ENCODE measurements at regions of chrX and their contacts with region 1.

Region 1: DNA sequence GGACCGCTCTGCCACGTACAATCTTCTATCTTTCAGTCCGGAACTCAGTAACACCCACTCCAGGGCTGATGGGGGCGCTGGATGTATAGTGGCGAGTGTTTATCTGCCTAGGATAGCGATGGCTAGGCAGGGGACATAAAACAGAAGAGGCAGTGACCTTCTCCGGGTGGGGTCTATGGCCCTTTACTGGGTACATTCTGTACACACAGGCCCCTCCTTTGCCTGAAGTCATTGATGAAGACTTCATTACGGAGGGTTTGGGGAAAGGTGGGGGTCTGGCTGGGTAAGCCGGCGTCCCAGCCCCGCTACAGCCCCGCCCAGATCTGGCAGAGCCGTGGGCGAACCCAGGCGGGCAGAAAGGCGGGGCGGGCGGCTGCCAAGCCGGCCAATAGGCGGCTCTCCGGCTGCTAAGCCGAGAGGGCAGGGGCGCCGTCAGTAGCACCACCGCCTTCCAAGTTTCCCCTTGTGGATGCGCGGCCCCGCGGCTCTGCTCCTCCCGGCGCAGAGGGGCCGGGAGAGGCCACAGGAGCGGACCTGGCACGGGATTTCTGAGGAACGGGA is at the start of gene CHST7:
- DNase-seq: peak; percentile 77
- ATAC-seq: peak; percentile 47
- H3K4me3 Mint-ChIP-seq: peak within 1 kb of the TSS; percentile 77
- H3K27ac Mint-ChIP-seq: peak within 1 kb of the TSS; percentile 95
- H3K4me1 Mint-ChIP-seq: peaks cover 41% of the 10 kb centered on the region
- H3K27me3 Mint-ChIP-seq: no peaks in the 10 kb centered on the region
- total RNA-seq, gene CHST7: 2.0 to 2.5 TPM

Region 2: DNA sequence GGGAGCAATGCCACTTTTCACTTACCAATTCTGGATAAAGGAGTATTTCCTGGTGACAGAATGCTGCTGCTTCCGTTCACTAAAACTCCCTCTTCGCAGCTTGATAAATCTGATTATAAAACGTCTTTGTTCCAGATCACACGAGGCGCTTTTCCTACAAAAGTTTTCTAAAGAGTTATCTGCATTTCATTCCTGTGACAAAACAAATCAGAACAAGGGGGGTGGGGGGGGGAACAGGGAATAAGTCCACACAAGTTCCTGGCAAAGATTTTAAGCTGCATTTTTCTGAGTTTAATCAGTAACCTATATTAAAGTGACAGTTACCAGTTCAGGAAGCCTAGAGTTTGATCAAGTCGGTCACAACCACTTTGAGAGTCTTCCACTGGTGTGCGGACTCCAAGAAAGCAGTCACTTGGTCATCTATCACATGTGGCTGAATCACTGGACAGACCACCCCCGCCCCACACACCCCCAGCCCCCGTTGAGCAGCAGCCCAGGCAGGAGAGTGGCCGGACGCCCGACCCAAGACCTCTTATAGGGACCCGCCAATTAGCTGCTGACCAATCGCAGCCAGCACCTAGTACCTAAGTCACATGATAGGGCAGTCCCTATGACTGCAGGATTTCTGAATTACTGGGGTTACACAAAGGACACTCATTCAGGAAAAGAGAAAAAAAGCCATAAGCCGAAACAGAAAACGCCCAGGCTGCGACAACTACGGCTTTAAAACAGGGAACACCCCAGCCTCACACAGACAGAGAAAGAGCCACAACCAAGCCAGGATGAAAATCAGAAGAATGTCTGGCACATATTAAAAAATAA is 803.4 kb before region 1 on chrX:
- CTCF ChIA-PET with region 1: no interaction called
- POLR2A ChIA-PET with region 1: no interaction called
- intact Hi-C with region 1: loop called in 1 of 2 experiments (anchors 10 kb)
- DNase-seq: peak; percentile 60
- ATAC-seq: peak; percentile 63
- H3K4me3 Mint-ChIP-seq: peak overlapping the region; percentile 77
- H3K27ac Mint-ChIP-seq: peak overlapping the region; percentile 98
- H3K4me1 Mint-ChIP-seq: peaks cover 53% of the 10 kb centered on the region
- H3K27me3 Mint-ChIP-seq: no peaks in the 10 kb centered on the region

Region 3: DNA sequence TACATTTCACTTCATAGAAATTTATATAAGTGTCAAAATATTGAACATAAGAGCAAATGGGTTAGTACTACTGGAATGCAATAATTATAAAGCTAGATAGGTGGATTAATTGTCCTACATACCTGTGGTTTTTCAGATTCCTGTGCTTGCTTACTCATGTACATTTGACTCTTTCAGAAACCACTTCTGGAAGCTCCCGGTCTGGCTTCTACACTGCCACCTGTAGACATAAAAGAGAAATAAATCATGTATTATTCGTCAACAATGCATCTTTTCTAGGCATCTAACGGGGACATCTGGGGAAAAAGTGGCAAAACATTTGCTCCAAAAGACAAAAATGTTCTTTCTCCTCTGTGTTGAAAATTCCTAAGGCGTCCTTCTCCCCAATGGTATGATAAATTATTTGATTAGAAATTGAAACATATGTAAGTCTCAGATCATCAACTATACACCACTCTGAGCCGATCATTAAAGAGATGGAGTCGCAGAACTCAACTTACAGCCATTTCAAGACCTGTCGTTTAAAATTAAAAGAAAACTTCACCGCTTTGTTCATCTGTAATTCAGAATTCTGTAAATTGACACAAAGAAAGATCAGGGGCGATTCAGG is 724.1 kb before region 1 on chrX:
- CTCF ChIA-PET with region 1: no interaction called
- POLR2A ChIA-PET with region 1: no interaction called
- intact Hi-C with region 1: loop called in 1 of 2 experiments (anchors 5 kb)
- DNase-seq: peak; percentile 35
- ATAC-seq: no peak
- H3K4me3 Mint-ChIP-seq: peak overlapping the region; percentile 99
- H3K27ac Mint-ChIP-seq: peak overlapping the region; percentile 98
- H3K4me1 Mint-ChIP-seq: peaks cover 39% of the 10 kb centered on the region
- H3K27me3 Mint-ChIP-seq: no peaks in the 10 kb centered on the region

Region 4: DNA sequence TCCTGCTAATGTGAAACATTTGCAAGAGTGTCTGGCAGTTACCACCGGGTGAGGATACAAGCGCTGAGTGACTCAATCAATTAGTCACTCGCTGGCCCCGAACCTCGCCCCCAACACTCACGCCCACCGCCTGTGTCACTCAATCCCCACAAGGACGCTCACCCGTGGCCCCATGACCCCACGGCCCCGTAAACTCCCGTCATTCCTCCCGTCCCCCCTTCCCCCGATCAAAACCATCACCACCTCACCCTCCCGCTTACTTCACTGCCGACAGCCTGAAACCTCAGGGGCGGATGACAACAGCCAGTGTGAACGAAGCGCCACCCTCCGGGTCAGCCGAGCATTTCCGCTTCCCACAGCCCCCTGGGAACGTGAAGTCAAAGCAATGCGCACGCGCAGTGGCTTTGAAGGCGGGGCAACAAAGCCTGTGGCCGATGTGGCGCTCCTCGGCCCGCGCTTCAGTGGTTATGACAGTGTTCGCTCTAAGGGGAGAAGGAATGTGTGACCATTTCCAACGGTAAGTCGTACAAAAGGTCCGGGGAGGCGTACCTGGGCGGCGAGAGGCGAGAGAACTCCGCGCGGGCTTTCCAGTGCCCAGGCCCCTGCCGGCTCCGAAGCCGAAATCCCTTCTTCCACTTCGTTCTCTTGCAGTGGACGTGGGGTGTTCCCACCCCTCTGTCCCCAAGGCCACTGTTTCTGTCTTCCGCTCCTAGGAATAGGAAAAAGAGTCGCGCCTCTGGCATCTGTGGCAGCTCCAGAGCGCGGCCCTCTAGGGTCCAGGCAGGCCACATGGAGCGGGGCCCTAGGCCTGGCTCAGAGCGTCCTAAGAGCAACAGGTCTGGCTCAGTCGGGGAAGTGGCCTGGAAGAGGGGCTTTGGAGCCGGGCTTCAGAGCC is 28.1 kb before region 1 on chrX and contains the start of gene ZNF674:
- CTCF ChIA-PET with region 1: no interaction called
- POLR2A ChIA-PET with region 1: interaction called, 4 read pairs
- intact Hi-C with region 1: loop called (anchors 1 kb)
- DNase-seq: peak; percentile 96
- ATAC-seq: peak; percentile 88
- H3K4me3 Mint-ChIP-seq: peak within 1 kb of the TSS; percentile 88
- H3K27ac Mint-ChIP-seq: peak within 1 kb of the TSS; percentile 94
- H3K4me1 Mint-ChIP-seq: peaks cover 32% of the 10 kb centered on the region
- H3K27me3 Mint-ChIP-seq: no peaks in the 10 kb centered on the region
- total RNA-seq, gene ZNF674: 2.0 to 2.6 TPM

Region 5: GRCh38 chrX:46628460-46629371 is 55.3 kb after region 1 on chrX:
- CTCF ChIA-PET with region 1: no interaction called
- POLR2A ChIA-PET with region 1: no interaction called
- intact Hi-C with region 1: loop called in 1 of 2 experiments (anchors 2 kb)
- DNase-seq: peak; percentile 37
- ATAC-seq: peak; percentile 76
- H3K4me3 Mint-ChIP-seq: no peak overlapping the region
- H3K27ac Mint-ChIP-seq: peak overlapping the region; percentile 40
- H3K4me1 Mint-ChIP-seq: peaks cover 37% of the 10 kb centered on the region
- H3K27me3 Mint-ChIP-seq: no peaks in the 10 kb centered on the region

Region 6: DNA sequence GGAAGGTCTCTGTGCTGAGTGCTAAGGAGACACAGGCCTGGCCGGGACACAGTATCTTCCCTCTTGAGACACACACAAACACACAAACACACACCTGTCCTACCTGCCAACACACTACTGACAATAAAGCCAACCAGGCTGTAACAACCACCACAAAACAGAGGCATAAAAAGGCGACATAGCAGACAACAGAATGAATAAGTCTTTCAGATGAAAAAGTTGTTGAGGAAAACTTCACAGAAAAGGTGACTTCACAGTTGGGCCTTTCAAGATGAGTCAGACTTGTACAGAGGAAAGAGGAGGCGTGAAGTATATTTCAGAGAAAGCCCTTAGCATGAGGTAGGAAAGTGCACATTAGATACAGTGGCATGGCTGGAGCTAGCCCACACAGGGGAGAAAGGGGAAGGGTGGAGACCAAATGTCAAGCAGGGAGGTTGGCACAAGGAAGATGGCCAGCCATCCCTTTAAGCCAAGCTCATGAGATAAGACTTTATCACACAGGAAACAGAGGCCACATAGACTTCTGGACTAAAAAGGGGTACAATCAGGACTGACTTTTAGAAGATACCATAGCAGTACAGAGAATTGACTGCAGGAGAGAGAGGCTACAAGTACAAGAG is 131.5 kb after region 1 on chrX:
- CTCF ChIA-PET with region 1: no interaction called
- POLR2A ChIA-PET with region 1: interaction called, 3 read pairs
- intact Hi-C with region 1: loop called in 1 of 2 experiments (anchors 2 kb)
- DNase-seq: peak; percentile 44
- ATAC-seq: peak; percentile 96
- H3K4me3 Mint-ChIP-seq: peak overlapping the region; percentile 64
- H3K27ac Mint-ChIP-seq: peak overlapping the region; percentile 94
- H3K4me1 Mint-ChIP-seq: peaks cover 58% of the 10 kb centered on the region
- H3K27me3 Mint-ChIP-seq: no peaks in the 10 kb centered on the region

Region 7: DNA sequence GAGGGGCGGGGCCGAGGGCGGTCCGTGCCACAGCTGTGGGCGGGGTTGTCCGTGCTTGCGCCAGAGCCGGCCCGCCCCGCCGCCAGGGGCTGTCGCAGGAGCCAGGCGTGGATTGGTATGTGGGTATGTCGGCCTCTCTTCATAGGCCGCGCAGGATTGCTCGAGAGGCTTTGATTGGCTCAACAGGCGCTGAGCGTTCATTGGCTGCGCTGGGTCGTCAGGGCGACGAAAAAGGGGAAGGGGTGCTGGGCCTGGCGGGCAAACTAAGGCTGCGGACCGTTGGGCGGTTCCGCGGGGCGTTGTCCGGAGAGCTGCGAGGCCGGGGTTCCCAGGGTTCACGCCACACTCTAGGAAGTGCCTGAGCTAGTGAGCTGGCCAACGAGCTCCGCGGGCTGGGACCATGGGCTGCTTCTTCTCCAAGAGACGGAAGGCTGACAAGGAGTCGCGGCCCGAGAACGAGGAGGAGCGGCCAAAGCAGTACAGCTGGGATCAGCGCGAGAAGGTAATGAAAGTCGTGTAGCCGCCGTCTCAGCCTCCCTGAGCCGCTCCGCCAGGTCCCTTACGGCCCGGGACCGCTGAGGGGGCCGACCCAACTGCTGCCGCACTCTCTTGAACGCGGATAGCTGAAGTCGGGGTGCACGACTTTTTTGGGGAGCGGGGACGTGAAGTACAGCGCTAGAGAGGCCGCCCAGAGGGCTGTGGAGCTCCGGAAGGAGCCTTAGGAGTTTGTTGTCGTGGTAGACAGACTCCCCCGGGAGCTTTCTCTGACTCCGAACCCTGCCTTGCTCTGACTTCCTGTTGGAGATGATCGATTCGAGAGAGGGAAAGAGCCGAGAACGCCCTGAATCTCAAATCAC is 263.5 kb after region 1 on chrX and contains the start of gene RP2:
- CTCF ChIA-PET with region 1: interaction called, 4 read pairs
- POLR2A ChIA-PET with region 1: no interaction called
- intact Hi-C with region 1: loop called in 1 of 2 experiments (anchors 1 kb)
- DNase-seq: peak; percentile 90
- ATAC-seq: peak; percentile 96
- H3K4me3 Mint-ChIP-seq: peak within 1 kb of the TSS; percentile 95
- H3K27ac Mint-ChIP-seq: peak within 1 kb of the TSS; percentile 86
- H3K4me1 Mint-ChIP-seq: peaks cover 5% of the 10 kb centered on the region
- H3K27me3 Mint-ChIP-seq: no peaks in the 10 kb centered on the region
- total RNA-seq, gene RP2: 3.3 to 5.0 TPM

Region 8: GRCh38 chrX:46961574-46962283 is 388.3 kb after region 1 on chrX:
- CTCF ChIA-PET with region 1: no interaction called
- POLR2A ChIA-PET with region 1: no interaction called
- intact Hi-C with region 1: no loop called
- DNase-seq: no peak
- ATAC-seq: no peak
- H3K4me3 Mint-ChIP-seq: no peak overlapping the region
- H3K27ac Mint-ChIP-seq: no peak overlapping the region
- H3K4me1 Mint-ChIP-seq: peaks cover 6% of the 10 kb centered on the region
- H3K27me3 Mint-ChIP-seq: peaks cover 5% of the 10 kb centered on the region

Measured in activated CD4-positive, alpha-beta T cell treated with anti-CD3 and anti-CD28 coated beads for 36 hours (primary cell).